ENCODE measurements at regions of chr18 and their contacts with region 1.

Region 1: GRCh38 chr18:3995476-3996102 is 459.5 kb downstream of the DLGAP1 start:
- DNase-seq: peak; percentile 47 to 71
- H3K4me3 ChIP-seq: no peak overlapping the region
- H3K4me3 Mint-ChIP-seq: no peak overlapping the region
- H3K27ac Mint-ChIP-seq: no peak overlapping the region
- H3K4me1 ChIP-seq: no peaks in the 10 kb centered on the region
- H3K4me1 Mint-ChIP-seq: no peaks in the 10 kb centered on the region
- H3K27me3 ChIP-seq: no peaks in the 10 kb centered on the region
- H3K27me3 Mint-ChIP-seq: no peaks in the 10 kb centered on the region
- CTCF ChIP-seq: peak; percentile 69 to 87

Region 2: DNA sequence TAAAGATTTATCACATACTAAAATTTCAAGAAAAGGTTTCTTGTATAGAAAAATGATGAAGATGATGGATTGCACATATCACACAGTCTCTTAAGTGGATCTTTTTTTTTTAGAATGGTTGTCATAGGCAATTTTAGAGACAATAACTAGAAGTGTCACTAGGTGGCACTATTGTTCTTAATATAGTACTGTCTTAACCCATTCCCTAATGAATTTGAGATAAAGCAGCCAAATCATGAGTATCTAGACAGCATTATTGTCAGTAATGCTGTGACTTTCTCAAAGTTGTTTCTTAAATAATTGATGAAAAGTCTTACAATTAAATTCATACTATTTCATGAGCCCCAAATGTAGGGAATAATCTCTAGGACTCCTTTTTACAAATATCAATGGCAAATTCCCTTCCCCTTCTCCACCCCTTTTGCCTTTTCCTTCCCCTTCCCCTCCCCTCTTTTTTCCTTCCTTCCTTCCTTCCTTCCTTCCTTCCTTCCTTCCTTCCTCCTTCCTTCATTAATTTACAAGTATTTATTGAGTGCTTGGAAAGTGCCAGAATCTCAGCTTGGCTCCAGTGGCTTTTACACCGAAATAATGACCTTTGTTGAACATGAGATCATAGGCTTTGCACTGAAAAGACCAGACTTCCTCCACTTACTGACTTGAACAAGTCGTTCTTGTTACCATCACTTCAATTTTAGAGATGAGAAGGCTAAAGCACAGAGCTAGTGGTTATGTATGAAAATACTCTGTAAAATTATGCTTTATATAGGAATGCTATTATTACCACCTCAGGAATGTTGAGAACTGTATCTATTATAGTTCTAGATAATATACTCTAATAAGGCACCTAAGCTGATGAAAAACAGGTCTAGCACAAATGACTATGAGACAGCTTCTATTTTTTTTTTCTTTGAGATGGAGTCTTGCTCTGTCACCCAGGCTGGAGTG is 713.9 kb before region 1 on chr18:
- CTCF ChIA-PET with region 1: interaction called, 3 read pairs
- POLR2A ChIA-PET with region 1: no interaction called
- intact Hi-C with region 1: loop called (anchors 1 kb)
- DNase-seq: peak in 1 of 2 experiments; percentile 78
- H3K4me3 ChIP-seq: no peak overlapping the region
- H3K4me3 Mint-ChIP-seq: no peak overlapping the region
- H3K27ac Mint-ChIP-seq: no peak overlapping the region
- H3K4me1 ChIP-seq: no peaks in the 10 kb centered on the region
- H3K4me1 Mint-ChIP-seq: peaks cover 13% of the 10 kb centered on the region
- H3K27me3 ChIP-seq: no peaks in the 10 kb centered on the region
- H3K27me3 Mint-ChIP-seq: no peaks in the 10 kb centered on the region
- CTCF ChIP-seq: peak; percentile 33 to 66

Region 3: GRCh38 chr18:3703732-3704176 is 291.8 kb before region 1 on chr18:
- CTCF ChIA-PET with region 1: interaction called, 3 read pairs
- POLR2A ChIA-PET with region 1: no interaction called
- intact Hi-C with region 1: loop called (anchors 1 kb)
- DNase-seq: peak; percentile 67 to 76
- H3K4me3 ChIP-seq: no peak overlapping the region
- H3K4me3 Mint-ChIP-seq: no peak overlapping the region
- H3K27ac Mint-ChIP-seq: no peak overlapping the region
- H3K4me1 ChIP-seq: no peaks in the 10 kb centered on the region
- H3K4me1 Mint-ChIP-seq: peaks cover 17% of the 10 kb centered on the region
- H3K27me3 ChIP-seq: no peaks in the 10 kb centered on the region
- H3K27me3 Mint-ChIP-seq: no peaks in the 10 kb centered on the region
- CTCF ChIP-seq: peak; percentile 81 to 88

Region 4: DNA sequence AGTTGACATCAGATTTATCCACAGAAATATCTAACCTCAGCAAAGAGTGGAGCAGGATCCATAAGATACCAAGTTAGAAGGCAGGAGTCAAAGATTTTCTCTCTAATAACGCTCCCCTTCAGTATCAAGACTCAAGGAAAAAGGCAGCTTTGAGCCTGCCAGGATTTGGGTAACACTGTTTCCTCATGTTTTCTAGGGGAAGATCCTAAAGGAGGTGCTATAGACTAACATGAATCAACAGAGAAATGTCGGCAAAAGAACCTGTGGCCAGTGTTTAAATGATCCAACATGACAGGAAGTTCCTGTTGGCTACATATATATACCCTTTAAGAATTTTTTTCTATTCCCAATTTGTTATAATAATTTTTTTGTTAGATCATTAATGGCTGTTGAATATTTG is 143.3 kb before region 1 on chr18:
- CTCF ChIA-PET with region 1: no interaction called
- POLR2A ChIA-PET with region 1: no interaction called
- intact Hi-C with region 1: loop called (anchors 1 kb)
- DNase-seq: peak in 1 of 2 experiments; percentile 19
- H3K4me3 ChIP-seq: no peak overlapping the region
- H3K4me3 Mint-ChIP-seq: no peak overlapping the region
- H3K27ac Mint-ChIP-seq: no peak overlapping the region
- H3K4me1 ChIP-seq: no peaks in the 10 kb centered on the region
- H3K4me1 Mint-ChIP-seq: no peaks in the 10 kb centered on the region
- H3K27me3 ChIP-seq: no peaks in the 10 kb centered on the region
- H3K27me3 Mint-ChIP-seq: peaks cover under 1% of the 10 kb centered on the region
- CTCF ChIP-seq: peak in 1 of 2 experiments; percentile 25

Region 5: DNA sequence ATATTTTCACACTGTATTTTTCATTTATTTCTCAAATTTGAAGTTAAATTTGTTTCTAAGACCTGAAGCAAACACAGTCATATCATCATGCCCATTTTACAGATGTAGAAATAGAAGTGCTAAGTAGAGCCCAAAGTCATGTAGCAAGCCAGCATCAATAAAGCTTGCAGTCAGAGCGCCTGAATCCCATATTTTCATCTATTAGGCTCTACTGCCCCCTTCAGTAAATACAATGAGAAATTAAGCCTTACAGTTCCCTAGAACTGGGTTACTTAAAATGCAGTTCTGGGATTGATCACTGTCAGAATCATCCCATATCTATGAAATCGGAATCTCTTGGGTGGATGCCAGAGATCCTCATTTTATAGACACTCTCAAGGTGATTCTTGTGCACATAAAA is 125.7 kb before region 1 on chr18:
- CTCF ChIA-PET with region 1: interaction called, 3 read pairs
- POLR2A ChIA-PET with region 1: no interaction called
- intact Hi-C with region 1: loop called (anchors 2 kb)
- DNase-seq: peak in 1 of 2 experiments; percentile 46
- H3K4me3 ChIP-seq: no peak overlapping the region
- H3K4me3 Mint-ChIP-seq: no peak overlapping the region
- H3K27ac Mint-ChIP-seq: no peak overlapping the region
- H3K4me1 ChIP-seq: no peaks in the 10 kb centered on the region
- H3K4me1 Mint-ChIP-seq: peaks cover 7% of the 10 kb centered on the region
- H3K27me3 ChIP-seq: no peaks in the 10 kb centered on the region; the same call in 1 of the 2 replicates
- H3K27me3 Mint-ChIP-seq: peaks cover 27% of the 10 kb centered on the region
- CTCF ChIP-seq: peak; percentile 42 to 49

Region 6: DNA sequence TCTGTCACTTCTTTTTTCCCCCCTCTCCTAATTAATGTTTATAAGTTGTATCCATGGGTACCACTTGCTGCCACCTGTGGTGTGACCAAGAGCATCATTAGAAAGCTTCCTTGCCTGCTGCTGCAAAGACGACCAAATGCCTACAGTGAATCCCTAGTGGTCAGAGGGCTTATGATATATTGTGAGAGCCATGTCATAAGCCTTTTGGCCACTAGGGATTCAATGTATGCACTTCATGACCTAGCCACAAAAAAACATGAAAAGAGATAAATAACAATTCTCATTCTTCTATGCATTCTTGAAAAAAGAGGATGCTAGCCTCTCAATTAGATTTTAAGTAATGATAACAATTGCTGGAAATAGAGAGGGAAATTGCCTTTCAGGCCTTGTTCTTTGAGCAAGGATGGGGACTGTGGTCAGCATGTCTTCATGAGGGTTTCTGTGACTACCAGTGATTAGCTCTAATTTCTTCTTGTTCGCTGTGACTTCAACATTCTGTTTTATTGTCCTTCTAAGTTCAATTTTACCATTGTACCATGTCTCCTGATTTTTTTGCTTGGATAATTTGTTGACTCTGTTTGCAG is 110.3 kb before region 1 on chr18:
- CTCF ChIA-PET with region 1: no interaction called
- POLR2A ChIA-PET with region 1: no interaction called
- intact Hi-C with region 1: loop called (anchors 1 kb)
- DNase-seq: peak in 1 of 2 experiments; percentile 25
- H3K4me3 ChIP-seq: no peak overlapping the region
- H3K4me3 Mint-ChIP-seq: no peak overlapping the region
- H3K27ac Mint-ChIP-seq: no peak overlapping the region
- H3K4me1 ChIP-seq: peaks cover 19% of the 10 kb centered on the region
- H3K4me1 Mint-ChIP-seq: peaks cover 20% of the 10 kb centered on the region
- H3K27me3 ChIP-seq: no peaks in the 10 kb centered on the region
- H3K27me3 Mint-ChIP-seq: no peaks in the 10 kb centered on the region
- CTCF ChIP-seq: peak; percentile 33 to 48

Region 7: DNA sequence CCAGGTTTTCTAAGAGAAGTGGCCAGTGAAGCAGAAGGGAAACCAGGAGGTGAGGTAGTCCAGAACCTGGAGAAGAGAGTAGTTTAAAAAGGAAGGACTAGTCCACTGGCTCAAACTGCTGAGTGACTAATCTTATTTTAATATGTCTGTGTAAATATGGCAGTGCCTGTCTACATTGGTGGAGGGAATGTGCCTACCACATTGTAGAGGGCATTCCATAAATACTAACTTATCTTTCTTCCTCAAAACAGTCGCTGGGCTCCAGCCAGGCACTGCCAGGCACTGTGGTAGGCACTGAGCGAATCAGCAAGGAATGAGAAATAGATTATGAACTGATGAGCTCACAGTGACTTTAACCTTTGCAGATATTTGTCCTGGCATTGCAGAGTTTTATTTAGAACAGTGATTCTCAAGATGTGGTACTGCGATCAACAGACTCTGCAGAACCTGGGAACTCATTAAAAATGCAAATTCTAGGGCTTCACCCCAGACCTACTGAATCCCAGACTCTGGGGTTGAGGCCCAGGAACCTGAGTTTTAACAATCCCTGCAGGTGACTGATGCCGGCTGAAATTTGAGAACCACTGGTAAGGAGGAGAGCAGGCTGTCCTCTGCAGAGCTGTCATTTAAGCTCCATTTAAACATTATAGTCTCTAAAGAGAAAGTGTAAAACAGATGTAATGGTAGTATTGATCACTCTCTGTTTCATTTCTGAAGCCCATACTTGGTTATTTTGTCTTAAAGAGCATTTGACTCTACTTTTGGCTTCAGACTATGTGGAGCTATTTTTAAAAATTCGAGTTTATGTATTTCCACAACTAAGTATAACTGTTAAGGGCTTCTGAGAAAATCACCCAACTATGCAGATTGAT is 28.4 kb before region 1 on chr18:
- CTCF ChIA-PET with region 1: no interaction called
- POLR2A ChIA-PET with region 1: no interaction called
- intact Hi-C with region 1: no loop called
- DNase-seq: no peak
- H3K4me3 ChIP-seq: no peak overlapping the region
- H3K4me3 Mint-ChIP-seq: no peak overlapping the region
- H3K27ac Mint-ChIP-seq: no peak overlapping the region
- H3K4me1 ChIP-seq: no peaks in the 10 kb centered on the region
- H3K4me1 Mint-ChIP-seq: peaks cover 7% of the 10 kb centered on the region
- H3K27me3 ChIP-seq: no peaks in the 10 kb centered on the region
- H3K27me3 Mint-ChIP-seq: no peaks in the 10 kb centered on the region
- CTCF ChIP-seq: no peak

Region 8: GRCh38 chr18:4068552-4069158 is 73.1 kb after region 1 on chr18:
- CTCF ChIA-PET with region 1: interaction called, 5 read pairs
- POLR2A ChIA-PET with region 1: no interaction called
- intact Hi-C with region 1: loop called (anchors 1 kb)
- DNase-seq: peak; percentile 49 to 69
- H3K4me3 ChIP-seq: no peak overlapping the region
- H3K4me3 Mint-ChIP-seq: no peak overlapping the region
- H3K27ac Mint-ChIP-seq: no peak overlapping the region
- H3K4me1 ChIP-seq: no peaks in the 10 kb centered on the region
- H3K4me1 Mint-ChIP-seq: no peaks in the 10 kb centered on the region
- H3K27me3 ChIP-seq: no peaks in the 10 kb centered on the region
- H3K27me3 Mint-ChIP-seq: peaks cover 7% of the 10 kb centered on the region
- CTCF ChIP-seq: peak; percentile 73